MCF 10A (cell line): ENCODE measurements at regions of chr2 and their contacts with region 1.

Region 1: GRCh38 chr2:44244129-44244871 is 31.0 kb upstream of the SLC3A1 start:
- DNase-seq: peak; percentile 74
- H3K4me3 Mint-ChIP-seq: peak overlapping the region; percentile 43
- H3K27ac Mint-ChIP-seq: no peak overlapping the region
- H3K4me1 Mint-ChIP-seq: peaks cover 14% of the 10 kb centered on the region
- H3K27me3 Mint-ChIP-seq: no peaks in the 10 kb centered on the region
- CTCF ChIP-seq: peak; percentile 43

Region 2: GRCh38 chr2:44167940-44168680 is 76.2 kb before region 1 on chr2:
- CTCF ChIA-PET with region 1: interaction called, 4 read pairs
- POLR2A ChIA-PET with region 1: interaction called, 23 read pairs
- intact Hi-C with region 1: no loop called
- DNase-seq: peak; percentile 100
- H3K4me3 Mint-ChIP-seq: peak overlapping the region; percentile 93
- H3K27ac Mint-ChIP-seq: peak overlapping the region; percentile 99
- H3K4me1 Mint-ChIP-seq: peaks cover 11% of the 10 kb centered on the region
- H3K27me3 Mint-ChIP-seq: no peaks in the 10 kb centered on the region
- CTCF ChIP-seq: no peak

Region 3: GRCh38 chr2:44291281-44292248 is 47.3 kb after region 1 on chr2:
- CTCF ChIA-PET with region 1: interaction called, 13 read pairs
- POLR2A ChIA-PET with region 1: interaction called, 4 read pairs
- intact Hi-C with region 1: loop called (anchors 1 kb)
- DNase-seq: peak; percentile 56
- H3K4me3 Mint-ChIP-seq: no peak overlapping the region
- H3K27ac Mint-ChIP-seq: no peak overlapping the region
- H3K4me1 Mint-ChIP-seq: peaks cover 26% of the 10 kb centered on the region
- H3K27me3 Mint-ChIP-seq: no peaks in the 10 kb centered on the region
- CTCF ChIP-seq: peak; percentile 45

Region 4: DNA sequence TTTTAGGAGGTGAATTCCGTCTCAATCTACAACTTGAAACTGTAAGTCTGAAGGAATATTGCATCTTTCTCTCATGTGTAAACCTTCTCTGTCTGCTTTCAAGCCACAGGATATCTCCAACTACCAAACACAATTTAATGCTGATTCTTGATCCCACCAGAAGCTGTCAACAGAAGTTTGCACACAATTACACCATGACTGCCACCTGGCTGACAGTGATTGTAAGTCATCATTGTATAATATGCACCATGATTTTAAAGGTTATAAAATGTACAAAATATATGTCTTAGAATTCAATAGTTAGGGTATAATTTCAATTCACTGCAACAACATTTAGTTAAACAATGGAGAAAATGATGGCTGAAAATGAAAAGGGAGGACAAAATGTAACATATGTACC is 98.6 kb after region 1 on chr2:
- CTCF ChIA-PET with region 1: interaction called, 5 read pairs
- POLR2A ChIA-PET with region 1: no interaction called
- intact Hi-C with region 1: loop called (anchors 5 kb)
- DNase-seq: peak; percentile 25
- H3K4me3 Mint-ChIP-seq: no peak overlapping the region
- H3K27ac Mint-ChIP-seq: no peak overlapping the region
- H3K4me1 Mint-ChIP-seq: no peaks in the 10 kb centered on the region
- H3K27me3 Mint-ChIP-seq: no peaks in the 10 kb centered on the region
- CTCF ChIP-seq: peak; percentile 36